Activated T-helper 2 cell treated with anti-CD3 and anti-CD28 coated beads, Interferon-gamma antibody, Interleukin-2, Interleukin-4, amounts not matched to agents 10 μg/mL and 5 μg/mL and 100 μg/mL, durations not matched to agents 14 hours and 24 hours and 36 hours (primary cell): ENCODE measurements at regions of chr3 and their contacts with region 1.

Region 1: DNA sequence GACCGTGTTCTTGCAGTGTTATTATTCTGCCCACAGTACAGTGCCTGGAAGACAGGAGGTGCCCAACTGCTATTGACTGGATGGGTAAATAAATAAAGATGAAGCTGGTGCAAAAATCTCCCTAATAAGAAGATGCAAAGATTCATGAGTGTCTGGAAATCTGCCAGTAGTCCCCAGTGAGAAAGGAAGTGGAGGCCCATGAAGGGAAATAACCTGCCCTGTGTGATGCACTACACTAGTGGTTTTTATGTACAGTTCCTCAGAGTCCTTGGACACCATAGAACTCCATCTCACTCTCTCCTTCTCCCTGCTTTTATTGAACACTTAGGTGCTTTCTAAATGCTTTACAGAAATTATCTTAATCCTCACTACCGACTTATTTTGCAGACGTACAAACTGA is 8.3 kb upstream of the SUCLG2 start:
- DNase-seq: no peak
- H3K4me3 Mint-ChIP-seq: no peak overlapping the region
- H3K27ac Mint-ChIP-seq: no peak overlapping the region
- H3K4me1 Mint-ChIP-seq: peaks cover 19% of the 10 kb centered on the region
- H3K27me3 Mint-ChIP-seq: peaks cover 3% of the 10 kb centered on the region

Region 2: GRCh38 chr3:67678665-67679064 is 15.9 kb after region 1 on chr3:
- intact Hi-C with region 1: loop called (anchors 2 kb)
- DNase-seq: peak; percentile 11
- H3K4me3 Mint-ChIP-seq: no peak overlapping the region
- H3K27ac Mint-ChIP-seq: no peak overlapping the region
- H3K4me1 Mint-ChIP-seq: peaks cover 18% of the 10 kb centered on the region
- H3K27me3 Mint-ChIP-seq: no peaks in the 10 kb centered on the region